ENCODE measurements at regions of chr1 and their contacts with region 1.

Region 1: GRCh38 chr1:10189659-10190058 is 20.7 kb upstream of the KIF1B start:
- DNase-seq: no peak
- H3K4me3 ChIP-seq: no peak overlapping the region
- H3K27ac ChIP-seq: no peak overlapping the region
- H3K4me1 ChIP-seq: no peaks in the 10 kb centered on the region
- H3K27me3 ChIP-seq: no peaks in the 10 kb centered on the region
- CTCF ChIP-seq: no peak

Region 2: GRCh38 chr1:9473032-9473792 is 716.4 kb before region 1 on chr1:
- CTCF ChIA-PET with region 1: no interaction called
- POLR2A ChIA-PET with region 1: interaction called, 42 read pairs
- intact Hi-C with region 1: no loop called
- DNase-seq: peak; percentile 71 to 77
- H3K4me3 ChIP-seq: no peak overlapping the region
- H3K27ac ChIP-seq: no peak overlapping the region
- H3K4me1 ChIP-seq: peaks cover 15% of the 10 kb centered on the region; the same call in 1 of the 2 replicates
- H3K27me3 ChIP-seq: no peaks in the 10 kb centered on the region
- CTCF ChIP-seq: no peak

Region 3: GRCh38 chr1:9960011-9960410 is 229.6 kb before region 1 on chr1:
- CTCF ChIA-PET with region 1: no interaction called
- POLR2A ChIA-PET with region 1: interaction called, 13 read pairs
- intact Hi-C with region 1: no loop called
- DNase-seq: no peak
- H3K4me3 ChIP-seq: no peak overlapping the region
- H3K27ac ChIP-seq: no peak overlapping the region
- H3K4me1 ChIP-seq: no peaks in the 10 kb centered on the region
- H3K27me3 ChIP-seq: no peaks in the 10 kb centered on the region
- CTCF ChIP-seq: no peak

Region 4: DNA sequence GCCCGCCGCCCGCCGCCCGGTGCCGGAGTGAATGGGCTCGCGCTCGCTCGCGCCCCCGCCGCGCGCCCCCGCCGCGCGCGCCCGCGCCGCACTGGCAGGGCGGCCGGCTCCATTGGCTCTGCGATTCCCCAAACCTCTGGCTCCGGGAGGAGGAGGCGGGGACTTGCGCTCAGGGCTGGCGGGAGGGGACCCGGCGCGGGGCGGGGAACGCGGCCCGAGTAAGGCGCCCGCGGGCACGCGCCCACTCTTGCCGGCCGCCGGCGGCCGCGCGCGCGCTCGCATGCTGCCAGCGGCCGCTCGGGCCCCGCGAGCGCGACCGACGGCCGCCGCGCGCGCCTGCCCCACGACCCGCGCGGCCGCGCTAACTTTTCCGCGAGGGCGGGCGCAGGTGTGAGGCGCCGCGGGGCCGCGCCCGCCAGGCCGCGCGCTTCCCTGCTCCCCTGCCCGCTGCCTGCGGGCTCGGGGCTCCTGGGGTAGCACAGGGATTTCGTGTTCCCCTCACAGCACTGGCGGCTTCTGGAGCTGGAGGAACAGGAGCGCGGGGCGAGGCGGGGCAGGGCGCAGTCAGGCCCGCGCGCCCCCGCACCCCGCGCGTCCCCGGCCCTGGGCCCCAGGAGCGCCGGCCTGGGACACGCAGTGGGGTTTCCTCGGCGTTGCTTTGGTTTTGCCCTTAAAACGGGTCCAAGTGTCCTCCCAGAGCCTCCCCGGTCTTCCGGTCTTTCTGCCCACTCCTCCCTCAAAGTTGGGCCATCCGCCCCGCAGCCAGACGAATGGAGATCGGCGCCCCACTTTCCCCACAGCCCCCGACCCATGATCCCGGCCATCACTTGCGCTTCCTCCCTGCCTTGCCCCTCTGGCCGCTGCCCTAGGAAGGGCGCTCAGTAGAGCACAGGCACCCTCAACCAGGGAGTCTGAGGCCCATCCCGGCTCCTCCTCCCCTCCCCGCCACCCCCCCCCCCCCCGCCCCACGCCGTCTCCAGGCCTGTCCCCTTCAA is 505.3 kb after region 1 on chr1:
- CTCF ChIA-PET with region 1: no interaction called
- POLR2A ChIA-PET with region 1: no interaction called
- intact Hi-C with region 1: no loop called
- DNase-seq: peak; percentile 58 to 89
- H3K4me3 ChIP-seq: peak overlapping the region; percentile 46; the same call in 1 of the 2 replicates
- H3K27ac ChIP-seq: no peak overlapping the region
- H3K4me1 ChIP-seq: peaks cover 32% of the 10 kb centered on the region
- H3K27me3 ChIP-seq: no peaks in the 10 kb centered on the region
- CTCF ChIP-seq: no peak

Measured in PC-9 (cell line).